ENCODE measurements at regions of chr1 and their contacts with region 1.

Region 1: DNA sequence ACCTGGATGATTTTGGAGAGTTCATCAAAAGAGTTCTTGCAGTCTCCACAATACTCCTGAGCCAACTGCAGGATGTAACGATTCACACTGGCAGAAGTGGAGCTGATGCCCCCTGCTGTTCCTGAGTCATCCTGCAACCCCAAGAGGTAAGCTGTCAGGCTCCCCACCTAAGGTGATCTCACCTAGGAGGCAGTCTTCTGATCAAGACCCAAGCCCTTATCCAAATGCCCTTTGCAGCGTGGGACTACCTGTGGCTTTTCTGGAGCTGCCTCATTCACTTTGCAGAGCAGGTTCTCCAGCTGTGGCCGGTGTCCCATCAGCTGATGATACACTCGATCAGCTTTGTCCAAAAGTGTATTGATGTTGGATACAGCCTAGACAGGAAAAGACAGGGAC is 96.4 kb downstream of the UBR4 start:
- DNase-seq: peak; percentile 34
- H3K4me3 ChIP-seq: no peak overlapping the region
- H3K27ac ChIP-seq: no peak overlapping the region
- H3K4me1 ChIP-seq: no peaks in the 10 kb centered on the region
- H3K27me3 ChIP-seq: no peaks in the 10 kb centered on the region
- CTCF ChIP-seq: peak; percentile 42 to 60
- POLR2A ChIP-seq: no peak

Region 2: DNA sequence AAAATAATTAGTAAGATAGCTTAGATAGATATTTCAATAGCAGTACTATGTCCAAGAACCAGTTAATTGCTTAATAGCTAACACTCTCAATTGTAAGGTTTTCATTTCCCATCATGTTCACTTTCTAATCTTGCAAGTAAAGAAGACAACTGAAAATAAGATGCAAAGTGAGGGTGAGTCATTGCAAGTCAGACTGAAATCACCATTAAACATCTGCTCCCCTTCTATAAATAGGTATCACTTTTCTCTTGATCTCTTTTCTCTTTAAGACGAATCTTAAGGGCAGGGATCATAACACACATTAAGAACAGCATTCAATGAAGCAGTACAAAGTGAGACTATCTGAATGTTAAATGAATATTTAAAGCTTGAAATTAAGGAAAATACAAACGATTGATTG is 55.9 kb after region 1 on chr1:
- CTCF ChIA-PET with region 1: interaction called, 10 read pairs
- POLR2A ChIA-PET with region 1: no interaction called
- dilution Hi-C with region 1: no loop called
- intact Hi-C with region 1: no loop called
- DNase-seq: no peak
- H3K4me3 ChIP-seq: no peak overlapping the region
- H3K27ac ChIP-seq: no peak overlapping the region
- H3K4me1 ChIP-seq: no peaks in the 10 kb centered on the region
- H3K27me3 ChIP-seq: no peaks in the 10 kb centered on the region
- CTCF ChIP-seq: no peak
- POLR2A ChIP-seq: no peak

Region 3: GRCh38 chr1:19179597-19180264 is 66.0 kb after region 1 on chr1:
- CTCF ChIA-PET with region 1: no interaction called
- POLR2A ChIA-PET with region 1: no interaction called
- dilution Hi-C with region 1: loop called (anchors 10 kb)
- intact Hi-C with region 1: no loop called
- DNase-seq: peak; percentile 39
- H3K4me3 ChIP-seq: no peak overlapping the region
- H3K27ac ChIP-seq: no peak overlapping the region
- H3K4me1 ChIP-seq: no peaks in the 10 kb centered on the region
- H3K27me3 ChIP-seq: no peaks in the 10 kb centered on the region
- CTCF ChIP-seq: peak in 1 of 2 donors; percentile 21
- POLR2A ChIP-seq: no peak